Activated CD4-positive, alpha-beta T cell treated with anti-CD3 and anti-CD28 coated beads for 36 hours (primary cell): ENCODE measurements at regions of chr11 and their contacts with region 1.

Region 1: GRCh38 chr11:66958232-66958955 is at the start of gene PC:
- DNase-seq: peak; percentile 99
- ATAC-seq: peak; percentile 98
- H3K4me3 Mint-ChIP-seq: peak within 1 kb of the TSS; percentile 78
- H3K27ac Mint-ChIP-seq: peak within 1 kb of the TSS; percentile 90
- H3K4me1 Mint-ChIP-seq: peaks cover 18% of the 10 kb centered on the region
- H3K27me3 Mint-ChIP-seq: no peaks in the 10 kb centered on the region
- total RNA-seq, gene PC: 9.2 to 9.3 TPM

Region 2: GRCh38 chr11:66288671-66289547 is 669.5 kb before region 1 on chr11 and contains the start of gene YIF1A:
- CTCF ChIA-PET with region 1: no interaction called
- POLR2A ChIA-PET with region 1: no interaction called
- intact Hi-C with region 1: loop called in 1 of 2 experiments (anchors 5 kb)
- DNase-seq: peak; percentile 99
- ATAC-seq: peak; percentile 97
- H3K4me3 Mint-ChIP-seq: peak within 1 kb of the TSS; percentile 89
- H3K27ac Mint-ChIP-seq: peak within 1 kb of the TSS; percentile 85
- H3K4me1 Mint-ChIP-seq: peaks cover 22% of the 10 kb centered on the region
- H3K27me3 Mint-ChIP-seq: peaks cover 8% of the 10 kb centered on the region
- total RNA-seq, gene YIF1A: 47.5 to 49.8 TPM

Region 3: GRCh38 chr11:66545701-66546367 is 412.6 kb before region 1 on chr11 and contains the start of gene ZDHHC24:
- CTCF ChIA-PET with region 1: no interaction called
- POLR2A ChIA-PET with region 1: no interaction called
- intact Hi-C with region 1: loop called in 1 of 2 experiments (anchors 2 kb)
- DNase-seq: peak; percentile 95
- ATAC-seq: peak; percentile 94
- H3K4me3 Mint-ChIP-seq: peak within 1 kb of the TSS; percentile 76
- H3K27ac Mint-ChIP-seq: peak within 1 kb of the TSS; percentile 67
- H3K4me1 Mint-ChIP-seq: peaks cover 20% of the 10 kb centered on the region
- H3K27me3 Mint-ChIP-seq: peaks cover 5% of the 10 kb centered on the region
- total RNA-seq, gene ZDHHC24: 9.7 to 11.3 TPM

Region 4: GRCh38 chr11:66842896-66843775 is 115.3 kb before region 1 on chr11 and contains the start of gene RCE1:
- CTCF ChIA-PET with region 1: interaction called, 3 read pairs
- POLR2A ChIA-PET with region 1: no interaction called
- intact Hi-C with region 1: loop called in 1 of 2 experiments (anchors 1 kb)
- DNase-seq: peak; percentile 95
- ATAC-seq: peak; percentile 85
- H3K4me3 Mint-ChIP-seq: peak within 1 kb of the TSS; percentile 92
- H3K27ac Mint-ChIP-seq: peak within 1 kb of the TSS; percentile 92
- H3K4me1 Mint-ChIP-seq: peaks cover 51% of the 10 kb centered on the region
- H3K27me3 Mint-ChIP-seq: no peaks in the 10 kb centered on the region
- total RNA-seq, gene RCE1: 24.9 to 25.6 TPM

Region 5: GRCh38 chr11:66929753-66930152 is 28.6 kb before region 1 on chr11:
- CTCF ChIA-PET with region 1: no interaction called
- POLR2A ChIA-PET with region 1: no interaction called
- intact Hi-C with region 1: no loop called
- DNase-seq: no peak
- ATAC-seq: no peak
- H3K4me3 Mint-ChIP-seq: no peak overlapping the region
- H3K27ac Mint-ChIP-seq: no peak overlapping the region
- H3K4me1 Mint-ChIP-seq: no peaks in the 10 kb centered on the region
- H3K27me3 Mint-ChIP-seq: no peaks in the 10 kb centered on the region

Region 6: GRCh38 chr11:66970808-66971442 is 12.5 kb after region 1 on chr11:
- CTCF ChIA-PET with region 1: interaction called, 5 read pairs
- POLR2A ChIA-PET with region 1: no interaction called
- intact Hi-C with region 1: loop called in 1 of 2 experiments (anchors 1 kb)
- DNase-seq: peak; percentile 57
- ATAC-seq: peak; percentile 98
- H3K4me3 Mint-ChIP-seq: no peak overlapping the region
- H3K27ac Mint-ChIP-seq: peak overlapping the region; percentile 24
- H3K4me1 Mint-ChIP-seq: peaks cover 17% of the 10 kb centered on the region
- H3K27me3 Mint-ChIP-seq: peaks cover 13% of the 10 kb centered on the region

Region 7: DNA sequence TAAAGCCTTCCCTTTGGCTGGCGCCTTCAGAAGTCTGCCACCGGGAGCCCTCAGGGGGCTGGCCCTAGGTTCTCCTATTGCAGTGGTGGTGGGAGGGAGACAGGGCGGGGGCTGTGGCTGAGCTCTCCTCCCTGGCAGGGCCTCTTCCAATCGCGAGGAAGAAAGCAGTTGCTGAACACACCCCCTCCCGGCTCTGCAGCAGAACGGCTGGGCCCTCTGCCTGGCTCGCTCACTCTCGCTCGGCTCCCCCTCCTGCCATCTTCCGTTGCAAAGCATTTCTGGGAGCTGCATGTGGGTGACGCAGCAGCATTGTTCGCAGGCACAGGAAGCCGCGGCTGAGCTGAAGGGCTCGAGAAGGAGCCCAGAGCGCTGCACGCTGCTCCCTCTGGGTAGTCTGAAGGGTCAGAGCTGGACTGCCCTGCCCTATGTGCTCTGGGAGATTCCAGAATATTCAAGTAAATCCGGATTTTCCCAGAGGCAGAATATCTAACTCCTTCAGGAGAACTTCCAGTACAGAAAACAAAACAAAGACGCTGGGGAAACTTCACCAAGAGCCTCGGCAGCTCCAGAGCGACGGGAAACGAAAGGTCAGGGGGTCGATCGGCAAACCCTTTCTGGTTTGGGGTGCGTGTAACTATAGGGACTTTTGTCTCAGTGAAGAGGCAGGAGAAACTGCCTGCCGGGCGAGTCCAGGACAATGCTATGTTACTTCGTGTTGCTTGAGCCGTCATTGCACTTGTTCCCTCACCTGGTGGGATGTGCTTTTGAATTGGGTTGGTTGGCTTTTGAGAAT is 281.6 kb after region 1 on chr11:
- CTCF ChIA-PET with region 1: no interaction called
- POLR2A ChIA-PET with region 1: no interaction called
- intact Hi-C with region 1: loop called in 1 of 2 experiments (anchors 1 kb)
- DNase-seq: peak; percentile 98
- ATAC-seq: peak; percentile 94
- H3K4me3 Mint-ChIP-seq: peak overlapping the region; percentile 98
- H3K27ac Mint-ChIP-seq: peak overlapping the region; percentile 99
- H3K4me1 Mint-ChIP-seq: peaks cover 43% of the 10 kb centered on the region
- H3K27me3 Mint-ChIP-seq: no peaks in the 10 kb centered on the region